ENCODE measurements at regions of chr5 and their contacts with region 1.

Region 1: GRCh38 chr5:33439905-33440481 is 772 bp upstream of the TARS1 start:
- DNase-seq: no peak
- ATAC-seq: no peak

Region 2: GRCh38 chr5:33936004-33936380 is 496.0 kb after region 1 on chr5:
- intact Hi-C with region 1: loop called (anchors 10 kb)
- DNase-seq: peak; percentile 81
- ATAC-seq: peak; percentile 96

Region 3: GRCh38 chr5:33969572-33970452 is 529.8 kb after region 1 on chr5:
- intact Hi-C with region 1: loop called (anchors 10 kb)
- DNase-seq: no peak
- ATAC-seq: peak; percentile 79